ENCODE measurements at regions of chr2 and their contacts with region 1.

Region 1: DNA sequence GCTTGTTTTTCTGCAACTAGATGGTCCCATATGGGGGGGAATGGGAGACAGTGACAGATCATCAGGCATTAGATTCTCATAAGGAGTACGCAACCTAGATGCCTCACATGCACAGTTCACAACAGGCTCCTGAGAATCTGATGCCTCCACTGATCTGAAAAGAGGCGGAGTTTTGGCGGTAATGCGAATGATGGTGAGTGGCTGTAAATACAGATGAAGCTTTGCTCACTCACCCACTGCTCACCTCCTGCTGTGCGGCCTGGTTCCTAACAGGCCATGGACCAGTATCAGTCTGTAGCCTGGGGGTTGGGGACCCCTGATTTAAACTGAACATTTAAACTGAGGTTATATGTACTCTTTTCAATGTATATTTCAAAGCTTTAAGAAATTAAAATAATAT is 40.7 kb downstream of the SOS1 start:
- DNase-seq: no peak
- ATAC-seq: no peak
- H3K4me3 ChIP-seq: no peak overlapping the region
- H3K27ac ChIP-seq: no peak overlapping the region
- H3K4me1 ChIP-seq: no peaks in the 10 kb centered on the region
- H3K27me3 ChIP-seq: no peaks in the 10 kb centered on the region
- CTCF ChIP-seq: no peak

Region 2: GRCh38 chr2:38892819-38893218 is 187.3 kb before region 1 on chr2:
- CTCF ChIA-PET with region 1: no interaction called
- POLR2A ChIA-PET with region 1: no interaction called
- in situ Hi-C with region 1: no loop called
- intact Hi-C with region 1: no loop called
- DNase-seq: no peak
- ATAC-seq: no peak
- H3K4me3 ChIP-seq: no peak overlapping the region
- H3K27ac ChIP-seq: no peak overlapping the region
- H3K4me1 ChIP-seq: no peaks in the 10 kb centered on the region
- H3K27me3 ChIP-seq: no peaks in the 10 kb centered on the region; the same call in 1 of the 2 replicates
- CTCF ChIP-seq: no peak

Region 3: GRCh38 chr2:39028863-39029262 is 51.3 kb before region 1 on chr2:
- CTCF ChIA-PET with region 1: no interaction called
- POLR2A ChIA-PET with region 1: interaction called, 13 read pairs
- in situ Hi-C with region 1: no loop called
- intact Hi-C with region 1: no loop called
- DNase-seq: no peak
- ATAC-seq: no peak
- H3K4me3 ChIP-seq: no peak overlapping the region
- H3K27ac ChIP-seq: no peak overlapping the region
- H3K4me1 ChIP-seq: no peaks in the 10 kb centered on the region
- H3K27me3 ChIP-seq: no peaks in the 10 kb centered on the region
- CTCF ChIP-seq: no peak